MCF 10A (cell line): ENCODE measurements at regions of chr7 and their contacts with region 1.

Region 1: DNA sequence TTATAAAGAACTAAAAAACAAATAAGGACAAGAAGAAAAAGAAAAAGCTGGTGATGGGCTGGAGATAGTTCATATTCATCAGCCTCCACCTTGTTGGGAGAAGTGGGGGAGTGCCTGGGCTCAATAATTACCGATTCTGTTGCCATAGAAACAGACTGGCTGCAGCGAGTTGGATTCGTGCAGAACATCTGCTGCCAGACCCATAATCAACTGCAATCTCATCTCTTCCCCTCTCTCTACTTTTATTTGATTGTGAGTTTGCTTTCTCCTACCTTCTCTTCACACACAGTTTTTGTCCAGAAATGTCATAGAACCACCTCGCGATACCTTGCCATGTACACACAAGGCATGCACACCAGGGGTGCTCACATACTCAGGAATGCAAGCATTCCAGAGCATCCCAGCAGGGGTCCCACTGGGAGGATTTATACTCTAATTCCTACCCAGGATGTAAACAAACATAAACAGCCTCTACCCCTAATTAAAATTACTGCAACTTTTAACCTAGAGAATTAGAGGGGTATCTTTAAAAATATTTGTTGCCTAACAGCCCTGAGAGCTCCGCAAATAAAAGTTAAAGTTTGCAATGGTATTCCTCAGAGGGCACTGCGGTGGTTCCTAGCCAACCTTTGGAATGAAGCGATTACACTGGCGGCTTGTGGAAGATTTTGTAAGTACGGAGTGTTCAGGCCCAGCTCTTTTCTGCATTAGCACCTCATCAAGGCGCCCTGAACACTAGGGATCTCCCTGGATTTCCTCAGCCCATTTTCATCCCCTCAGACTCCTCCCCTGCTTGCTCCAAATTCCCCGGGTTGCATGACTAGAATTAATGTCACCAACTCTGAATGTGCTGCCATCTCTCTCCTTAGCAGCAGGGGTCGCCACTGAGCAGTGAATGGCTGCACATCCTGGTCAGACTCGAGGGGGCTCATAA is 262.4 kb upstream of the AOAH start:
- DNase-seq: peak; percentile 62
- H3K4me3 Mint-ChIP-seq: no peak overlapping the region
- H3K27ac Mint-ChIP-seq: no peak overlapping the region
- H3K4me1 Mint-ChIP-seq: no peaks in the 10 kb centered on the region
- H3K27me3 Mint-ChIP-seq: peaks cover 73% of the 10 kb centered on the region
- CTCF ChIP-seq: peak; percentile 84

Region 2: GRCh38 chr7:36967387-36967786 is 19.3 kb before region 1 on chr7:
- CTCF ChIA-PET with region 1: interaction called, 55 read pairs
- POLR2A ChIA-PET with region 1: interaction called, 3 read pairs
- intact Hi-C with region 1: no loop called
- DNase-seq: peak; percentile 73
- H3K4me3 Mint-ChIP-seq: no peak overlapping the region
- H3K27ac Mint-ChIP-seq: no peak overlapping the region
- H3K4me1 Mint-ChIP-seq: no peaks in the 10 kb centered on the region
- H3K27me3 Mint-ChIP-seq: no peaks in the 10 kb centered on the region
- CTCF ChIP-seq: peak; percentile 71

Region 3: DNA sequence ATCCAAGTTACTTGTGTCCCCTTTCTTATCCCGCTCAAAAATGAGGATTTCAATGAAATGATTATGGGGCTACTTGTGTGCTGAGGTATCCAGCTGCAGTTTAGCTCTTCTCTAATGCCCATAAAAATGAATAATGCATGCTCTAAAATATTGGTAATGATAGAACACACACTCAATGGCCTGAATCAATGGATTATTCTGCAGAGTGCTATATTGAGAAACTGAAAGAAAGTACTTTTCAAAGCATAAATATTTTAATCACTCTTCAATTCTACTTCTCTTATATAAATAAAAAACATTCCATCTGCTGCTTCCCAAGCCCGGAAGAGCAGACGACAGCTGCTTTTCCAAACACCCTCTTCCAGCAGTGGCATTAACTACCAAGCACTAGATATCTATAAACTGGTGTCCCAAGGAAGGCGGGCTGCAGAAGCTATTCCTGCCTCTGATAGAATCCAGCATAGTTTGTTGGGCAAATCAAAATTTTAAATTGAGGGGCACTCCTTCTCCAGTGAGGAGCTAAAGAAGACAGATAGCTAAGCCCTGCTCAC is 22.5 kb after region 1 on chr7:
- CTCF ChIA-PET with region 1: interaction called, 13 read pairs
- POLR2A ChIA-PET with region 1: no interaction called
- intact Hi-C with region 1: no loop called
- DNase-seq: no peak
- H3K4me3 Mint-ChIP-seq: no peak overlapping the region
- H3K27ac Mint-ChIP-seq: no peak overlapping the region
- H3K4me1 Mint-ChIP-seq: no peaks in the 10 kb centered on the region
- H3K27me3 Mint-ChIP-seq: peaks cover 8% of the 10 kb centered on the region
- CTCF ChIP-seq: no peak

Region 4: GRCh38 chr7:37109843-37110242 is 123.1 kb after region 1 on chr7:
- CTCF ChIA-PET with region 1: no interaction called
- POLR2A ChIA-PET with region 1: no interaction called
- intact Hi-C with region 1: no loop called
- DNase-seq: no peak
- H3K4me3 Mint-ChIP-seq: no peak overlapping the region
- H3K27ac Mint-ChIP-seq: no peak overlapping the region
- H3K4me1 Mint-ChIP-seq: no peaks in the 10 kb centered on the region
- H3K27me3 Mint-ChIP-seq: no peaks in the 10 kb centered on the region
- CTCF ChIP-seq: no peak

Region 5: DNA sequence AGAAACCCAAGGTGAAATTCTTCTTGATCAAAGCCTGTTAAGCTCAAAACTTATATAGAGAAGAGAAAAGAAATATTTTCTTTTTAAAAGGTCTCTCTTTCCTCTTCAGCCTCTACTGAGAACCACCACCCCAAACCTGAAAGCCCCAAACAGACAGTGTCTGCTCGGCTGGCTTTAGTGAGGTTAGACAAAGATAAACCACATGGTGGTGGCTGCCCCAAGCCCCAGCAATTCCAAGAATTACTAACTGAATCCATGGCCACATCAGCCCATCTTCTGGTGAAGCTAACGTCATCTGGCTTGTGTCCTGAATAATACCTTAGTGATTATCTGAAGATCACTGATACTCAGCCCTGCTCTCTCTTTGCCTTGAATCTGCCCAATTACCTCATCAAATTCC is 187.0 kb after region 1 on chr7:
- CTCF ChIA-PET with region 1: interaction called, 13 read pairs
- POLR2A ChIA-PET with region 1: no interaction called
- intact Hi-C with region 1: no loop called
- DNase-seq: no peak
- H3K4me3 Mint-ChIP-seq: no peak overlapping the region
- H3K27ac Mint-ChIP-seq: no peak overlapping the region
- H3K4me1 Mint-ChIP-seq: no peaks in the 10 kb centered on the region
- H3K27me3 Mint-ChIP-seq: peaks cover 20% of the 10 kb centered on the region
- CTCF ChIP-seq: no peak